MCF 10A (cell line): ENCODE measurements at regions of chr2 and their contacts with region 1.

Region 1: GRCh38 chr2:27322766-27323595 is at the start of gene MPV17:
- DNase-seq: peak; percentile 95
- H3K4me3 Mint-ChIP-seq: peak within 1 kb of the TSS; percentile 91
- H3K27ac Mint-ChIP-seq: peak within 1 kb of the TSS; percentile 99
- H3K4me1 Mint-ChIP-seq: peaks cover 23% of the 10 kb centered on the region
- H3K27me3 Mint-ChIP-seq: no peaks in the 10 kb centered on the region
- CTCF ChIP-seq: no peak
- total RNA-seq, gene MPV17: 104 and 114 TPM in 2 replicates

Region 2: GRCh38 chr2:27211829-27212627 is 111.0 kb before region 1 on chr2 and contains the starts of genes ATRAID and SLC5A6:
- CTCF ChIA-PET with region 1: no interaction called
- POLR2A ChIA-PET with region 1: interaction called, 11 read pairs
- intact Hi-C with region 1: no loop called
- DNase-seq: peak; percentile 87
- H3K4me3 Mint-ChIP-seq: peak within 1 kb of the TSS; percentile 86
- H3K27ac Mint-ChIP-seq: peak within 1 kb of the TSS; percentile 99
- H3K4me1 Mint-ChIP-seq: peaks cover 21% of the 10 kb centered on the region
- H3K27me3 Mint-ChIP-seq: no peaks in the 10 kb centered on the region
- CTCF ChIP-seq: no peak
- total RNA-seq, gene ATRAID: 115 and 122 TPM in 2 replicates
- total RNA-seq, gene SLC5A6: 25.9 and 26.9 TPM in 2 replicates

Region 3: DNA sequence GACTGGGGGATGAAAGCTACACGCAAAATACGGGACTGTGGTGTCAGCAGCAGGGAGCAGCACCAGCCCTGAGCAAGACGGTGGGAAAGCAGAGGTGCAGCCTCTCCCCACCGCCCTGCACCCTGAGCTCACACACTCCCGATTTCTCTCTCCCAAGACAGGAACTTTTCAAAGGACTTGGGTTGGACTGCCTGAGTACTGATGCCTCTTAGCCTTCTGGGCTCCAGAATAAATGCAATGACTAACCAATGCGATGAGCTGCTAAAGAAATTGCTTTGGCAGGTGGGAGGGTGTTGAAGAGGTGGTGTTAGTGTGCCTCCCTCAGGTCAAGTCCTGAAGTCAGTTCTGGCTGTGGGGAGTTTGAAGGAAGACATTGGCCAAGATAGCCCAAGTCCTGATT is 31.1 kb before region 1 on chr2:
- CTCF ChIA-PET with region 1: interaction called, 3 read pairs
- POLR2A ChIA-PET with region 1: interaction called, 10 read pairs
- intact Hi-C with region 1: no loop called
- DNase-seq: peak; percentile 33
- H3K4me3 Mint-ChIP-seq: no peak overlapping the region
- H3K27ac Mint-ChIP-seq: no peak overlapping the region
- H3K4me1 Mint-ChIP-seq: peaks cover 8% of the 10 kb centered on the region
- H3K27me3 Mint-ChIP-seq: peaks cover 14% of the 10 kb centered on the region
- CTCF ChIP-seq: no peak

Region 4: GRCh38 chr2:27335311-27335710 is 12.3 kb after region 1 on chr2:
- CTCF ChIA-PET with region 1: interaction called, 4 read pairs
- POLR2A ChIA-PET with region 1: interaction called, 21 read pairs
- intact Hi-C with region 1: no loop called
- DNase-seq: no peak
- H3K4me3 Mint-ChIP-seq: no peak overlapping the region
- H3K27ac Mint-ChIP-seq: no peak overlapping the region
- H3K4me1 Mint-ChIP-seq: no peaks in the 10 kb centered on the region
- H3K27me3 Mint-ChIP-seq: no peaks in the 10 kb centered on the region
- CTCF ChIP-seq: no peak

Region 5: DNA sequence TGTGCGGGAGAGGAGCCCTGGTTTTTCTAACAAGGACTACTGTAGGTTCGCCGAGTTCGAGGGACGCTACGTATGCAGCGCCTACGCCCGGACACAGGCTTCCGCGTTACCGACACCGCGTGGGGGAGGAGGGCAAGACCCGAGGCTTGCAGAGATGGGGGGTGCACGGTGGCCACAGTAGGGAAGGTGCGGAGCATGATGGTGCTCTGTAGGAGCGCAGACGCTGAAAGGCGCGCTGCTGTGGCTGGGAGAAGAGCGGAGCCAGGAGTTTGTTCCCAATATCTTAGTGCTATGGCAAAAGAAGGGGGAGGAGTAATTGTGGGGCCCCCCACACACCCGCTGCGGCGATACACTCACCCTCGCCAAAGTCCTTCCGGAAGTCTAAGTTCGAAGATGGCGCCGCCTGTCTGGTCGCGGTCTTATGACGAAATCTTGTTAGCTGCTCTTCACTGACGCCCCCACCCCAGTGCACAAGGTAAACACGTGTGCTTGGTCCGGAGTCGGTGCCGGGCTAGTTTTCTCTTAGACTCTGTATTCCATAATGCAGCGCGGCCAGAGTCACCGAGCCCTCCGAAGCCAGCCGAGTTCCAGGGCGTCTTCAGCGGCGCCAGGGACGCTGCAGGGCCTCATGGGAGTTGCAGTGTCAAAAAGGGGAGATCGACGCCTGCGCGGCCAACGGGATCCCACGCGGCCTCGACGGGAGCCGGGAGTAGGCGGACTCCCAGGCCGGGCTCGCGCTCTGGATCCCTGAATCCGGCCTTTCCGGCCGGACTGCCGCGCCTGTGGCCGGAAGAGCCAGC is 33.6 kb after region 1 on chr2 and contains the start of gene GTF3C2:
- CTCF ChIA-PET with region 1: interaction called, 7 read pairs
- POLR2A ChIA-PET with region 1: interaction called, 98 read pairs
- intact Hi-C with region 1: loop called (anchors 1 kb)
- DNase-seq: peak; percentile 97
- H3K4me3 Mint-ChIP-seq: peak within 1 kb of the TSS; percentile 90
- H3K27ac Mint-ChIP-seq: peak within 1 kb of the TSS; percentile 93
- H3K4me1 Mint-ChIP-seq: peaks cover 31% of the 10 kb centered on the region
- H3K27me3 Mint-ChIP-seq: no peaks in the 10 kb centered on the region
- CTCF ChIP-seq: no peak
- total RNA-seq, gene GTF3C2: 47.5 and 47.8 TPM in 2 replicates

Region 6: DNA sequence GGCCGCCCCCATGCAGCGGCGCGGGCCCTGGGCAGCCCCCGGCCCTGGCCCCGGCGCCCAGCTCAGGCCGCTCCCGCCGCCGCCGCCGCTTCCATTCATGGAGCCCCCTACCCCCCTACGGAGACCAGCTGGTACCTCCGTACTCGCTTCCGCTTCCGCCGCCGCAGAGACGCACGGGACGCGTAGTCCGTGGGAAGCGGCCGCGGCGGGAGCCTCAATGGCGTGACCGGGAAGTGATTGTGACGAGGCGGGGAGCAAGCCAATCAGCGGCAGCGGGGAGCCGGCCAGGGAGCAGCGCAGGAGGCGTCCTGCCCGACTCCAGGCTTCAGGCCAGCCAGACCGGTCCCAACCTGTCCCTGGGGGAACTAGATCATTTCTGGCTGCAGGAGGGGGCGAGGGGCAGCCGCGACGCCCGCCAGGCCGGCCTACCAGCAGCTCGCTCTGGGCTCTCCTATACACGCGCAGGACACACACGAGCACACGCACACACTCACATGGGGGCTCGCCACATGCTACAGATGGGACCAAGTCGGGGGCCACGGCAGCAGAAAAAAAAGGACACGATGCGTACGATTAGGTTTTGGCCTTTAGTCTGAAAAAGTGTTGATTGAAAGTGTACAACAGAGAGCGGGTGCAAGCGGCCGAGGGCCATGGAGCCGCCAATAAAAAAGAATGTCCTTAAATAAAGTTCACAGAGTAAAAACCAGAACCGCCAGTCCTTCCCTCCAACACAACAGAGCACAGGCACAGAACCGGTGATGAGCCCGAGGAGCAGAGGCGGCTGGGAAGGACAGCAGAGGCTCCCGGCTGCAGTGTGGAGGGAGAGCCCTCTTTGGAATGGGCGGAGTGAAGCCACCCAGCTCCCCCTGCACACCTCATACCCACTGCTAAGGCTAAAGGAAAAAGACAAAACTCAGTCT is 57.9 kb after region 1 on chr2 and contains the start of gene ZNF513:
- CTCF ChIA-PET with region 1: interaction called, 14 read pairs
- POLR2A ChIA-PET with region 1: interaction called, 52 read pairs
- intact Hi-C with region 1: no loop called
- DNase-seq: peak; percentile 95
- H3K4me3 Mint-ChIP-seq: peak within 1 kb of the TSS; percentile 84
- H3K27ac Mint-ChIP-seq: peak within 1 kb of the TSS; percentile 93
- H3K4me1 Mint-ChIP-seq: peaks cover 20% of the 10 kb centered on the region
- H3K27me3 Mint-ChIP-seq: no peaks in the 10 kb centered on the region
- CTCF ChIP-seq: no peak
- total RNA-seq, gene ZNF513: 14.8 and 16.2 TPM in 2 replicates

Region 7: DNA sequence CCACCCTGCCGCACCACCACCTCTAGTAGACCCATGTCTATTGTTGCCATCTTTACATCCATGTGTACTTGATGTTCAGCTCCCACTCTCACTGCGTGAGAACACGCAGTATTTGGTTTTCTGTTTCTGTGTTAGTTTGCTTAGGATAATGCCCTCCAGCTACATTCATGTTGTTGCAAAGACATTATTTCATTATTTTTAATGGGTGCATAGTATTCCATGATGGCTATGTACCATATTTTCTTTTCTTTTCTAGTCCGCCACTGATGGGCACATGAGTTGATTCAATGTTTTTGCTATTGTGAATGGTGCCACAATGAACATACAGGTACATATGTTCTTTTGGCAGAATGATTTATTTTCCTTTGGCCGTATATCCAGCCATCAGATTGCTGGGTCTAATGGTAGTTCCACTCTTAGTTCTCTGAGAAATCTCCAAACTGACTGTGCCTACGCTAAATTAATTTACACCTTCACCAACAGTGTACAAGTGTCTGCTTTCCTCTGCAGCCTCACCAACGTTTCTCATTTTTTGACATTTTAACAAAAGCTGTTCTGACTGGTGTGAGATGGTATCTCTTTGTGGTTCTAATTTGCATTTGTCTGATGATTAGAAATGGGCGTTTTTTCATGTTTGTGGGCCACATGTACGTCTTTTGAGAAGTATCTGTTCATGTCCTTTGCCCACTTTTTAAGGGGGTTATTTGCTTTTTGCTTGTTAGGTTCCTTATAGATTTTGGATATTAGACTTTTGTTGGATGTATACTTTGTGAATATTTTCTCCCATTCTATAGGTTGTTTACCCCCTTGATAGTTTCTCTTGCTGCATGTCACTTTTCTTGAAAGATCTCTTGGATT is 68.1 kb after region 1 on chr2:
- CTCF ChIA-PET with region 1: no interaction called
- POLR2A ChIA-PET with region 1: no interaction called
- intact Hi-C with region 1: no loop called
- DNase-seq: no peak
- H3K4me3 Mint-ChIP-seq: no peak overlapping the region
- H3K27ac Mint-ChIP-seq: no peak overlapping the region
- H3K4me1 Mint-ChIP-seq: no peaks in the 10 kb centered on the region
- H3K27me3 Mint-ChIP-seq: no peaks in the 10 kb centered on the region
- CTCF ChIP-seq: no peak

Region 8: GRCh38 chr2:27683390-27684071 is 360.6 kb after region 1 on chr2:
- CTCF ChIA-PET with region 1: no interaction called
- POLR2A ChIA-PET with region 1: no interaction called
- intact Hi-C with region 1: loop called (anchors 2 kb)
- DNase-seq: peak; percentile 94
- H3K4me3 Mint-ChIP-seq: peak overlapping the region; percentile 35
- H3K27ac Mint-ChIP-seq: peak overlapping the region; percentile 59
- H3K4me1 Mint-ChIP-seq: peaks cover 29% of the 10 kb centered on the region
- H3K27me3 Mint-ChIP-seq: no peaks in the 10 kb centered on the region
- CTCF ChIP-seq: peak; percentile 99